ENCODE measurements at regions of chr5 and their contacts with region 1.

Region 1: GRCh38 chr5:68240202-68240601 is 24.6 kb downstream of the PIK3R1 start:
- DNase-seq: no peak
- ATAC-seq: no peak
- H3K4me3 ChIP-seq: no peak overlapping the region
- H3K27ac ChIP-seq: peak overlapping the region in 1 of 4 donors; percentile 60
- H3K4me1 ChIP-seq: peaks cover 32% of the 10 kb centered on the region
- H3K27me3 ChIP-seq: no peaks in the 10 kb centered on the region
- CTCF ChIP-seq: no peak
- POLR2A ChIP-seq: no peak

Region 2: DNA sequence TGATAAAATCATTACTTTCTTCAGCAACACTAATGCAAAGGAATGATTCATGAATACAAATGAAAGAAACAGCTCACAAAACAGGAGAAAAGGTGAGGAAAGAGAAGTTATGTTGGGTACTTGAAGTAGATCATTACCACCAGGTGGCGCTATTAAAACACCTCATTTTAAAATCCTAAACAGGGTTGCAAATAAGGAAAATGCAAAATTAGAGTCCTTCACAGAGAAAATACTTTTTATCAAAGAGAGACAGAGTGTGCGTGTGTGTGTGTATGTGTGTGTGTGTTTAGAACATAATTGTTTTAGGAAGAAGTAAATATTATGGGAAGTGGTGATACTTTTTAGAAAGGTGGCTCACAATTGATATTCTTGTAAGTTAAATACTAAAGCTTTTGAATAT is 994.1 kb before region 1 on chr5:
- intact Hi-C with region 1: loop called (anchors 10 kb)
- DNase-seq: peak in 1 of 4 donors; percentile 54
- ATAC-seq: peak; percentile 75
- H3K4me3 ChIP-seq: no peak overlapping the region
- H3K27ac ChIP-seq: no peak overlapping the region
- H3K4me1 ChIP-seq: no peaks in the 10 kb centered on the region
- H3K27me3 ChIP-seq: no peaks in the 10 kb centered on the region
- CTCF ChIP-seq: peak; percentile 50 to 86 (median 77)
- POLR2A ChIP-seq: no peak

Region 3: GRCh38 chr5:68046445-68046844 is 193.8 kb before region 1 on chr5:
- intact Hi-C with region 1: no loop called
- DNase-seq: peak in 1 of 4 donors; percentile 37
- ATAC-seq: no peak
- H3K4me3 ChIP-seq: no peak overlapping the region
- H3K27ac ChIP-seq: no peak overlapping the region
- H3K4me1 ChIP-seq: no peaks in the 10 kb centered on the region
- H3K27me3 ChIP-seq: no peaks in the 10 kb centered on the region
- CTCF ChIP-seq: no peak
- POLR2A ChIP-seq: no peak

Region 4: DNA sequence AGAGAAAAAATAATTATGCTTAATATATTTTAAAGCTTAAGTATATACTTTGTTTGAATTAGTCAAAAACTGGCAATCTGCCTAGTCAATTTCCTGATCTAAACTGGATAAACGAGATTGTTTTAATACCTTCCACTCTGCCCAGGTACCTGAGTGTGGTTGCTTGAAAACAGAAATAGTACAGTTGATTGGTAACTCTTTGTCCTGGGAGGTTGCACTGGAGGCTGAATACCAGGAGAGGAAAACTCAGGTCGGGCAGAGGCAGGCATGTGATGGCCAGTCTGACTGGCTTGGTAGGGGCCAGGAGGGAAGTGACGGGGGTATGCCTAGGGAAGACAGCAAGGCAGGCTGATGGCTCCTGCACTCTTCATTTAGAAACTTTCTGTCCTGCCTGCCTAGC is 55.6 kb after region 1 on chr5:
- intact Hi-C with region 1: no loop called
- DNase-seq: no peak
- ATAC-seq: no peak
- H3K4me3 ChIP-seq: no peak overlapping the region
- H3K27ac ChIP-seq: peak overlapping the region in 1 of 4 donors; percentile 8
- H3K4me1 ChIP-seq: peaks cover 23% of the 10 kb centered on the region
- H3K27me3 ChIP-seq: no peaks in the 10 kb centered on the region
- CTCF ChIP-seq: no peak
- POLR2A ChIP-seq: no peak

Region 5: GRCh38 chr5:68369457-68370125 is 129.4 kb after region 1 on chr5:
- intact Hi-C with region 1: no loop called
- DNase-seq: peak in 1 of 4 donors; percentile 20
- ATAC-seq: no peak
- H3K4me3 ChIP-seq: no peak overlapping the region
- H3K27ac ChIP-seq: no peak overlapping the region
- H3K4me1 ChIP-seq: no peaks in the 10 kb centered on the region
- H3K27me3 ChIP-seq: no peaks in the 10 kb centered on the region
- CTCF ChIP-seq: no peak
- POLR2A ChIP-seq: no peak

Measured in body of pancreas (tissue), 4 donors.